ENCODE measurements at regions of chr6 and their contacts with region 1.

Region 1: DNA sequence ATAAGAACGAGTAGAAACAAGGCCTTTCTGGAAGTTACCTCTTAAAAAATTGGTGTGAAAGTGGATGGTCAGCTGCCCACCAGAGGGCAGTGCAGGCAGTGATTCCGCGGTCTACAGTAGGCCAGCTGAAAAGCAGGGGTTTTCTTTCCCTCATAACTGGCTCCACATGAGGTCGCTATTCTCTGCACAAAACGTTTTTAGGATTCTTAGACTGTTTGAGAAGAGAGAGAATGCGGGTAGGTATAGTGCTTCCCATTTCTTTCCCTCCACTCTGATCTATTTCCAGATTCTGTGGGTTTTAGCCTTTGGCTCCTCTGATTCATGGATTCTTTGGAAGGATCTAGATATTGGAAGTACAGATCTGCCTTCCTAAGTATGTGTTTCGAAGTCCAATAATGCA is 14.2 kb downstream of the FIG4 start:
- DNase-seq: peak; percentile 67 to 83
- ATAC-seq: peak; percentile 87 to 99 (median 94)
- H3K4me3 ChIP-seq: no peak overlapping the region
- H3K27ac ChIP-seq: no peak overlapping the region
- H3K4me1 ChIP-seq: no peaks in the 10 kb centered on the region
- H3K27me3 ChIP-seq: no peaks in the 10 kb centered on the region
- CTCF ChIP-seq: peak; percentile 96

Region 2: GRCh38 chr6:109783250-109783986 is 78.2 kb after region 1 on chr6:
- intact Hi-C with region 1: loop called (anchors 1 to 5 kb)
- DNase-seq: no peak
- ATAC-seq: no peak
- H3K4me3 ChIP-seq: no peak overlapping the region
- H3K27ac ChIP-seq: no peak overlapping the region
- H3K4me1 ChIP-seq: no peaks in the 10 kb centered on the region
- H3K27me3 ChIP-seq: no peaks in the 10 kb centered on the region
- CTCF ChIP-seq: peak; percentile 10

Region 3: DNA sequence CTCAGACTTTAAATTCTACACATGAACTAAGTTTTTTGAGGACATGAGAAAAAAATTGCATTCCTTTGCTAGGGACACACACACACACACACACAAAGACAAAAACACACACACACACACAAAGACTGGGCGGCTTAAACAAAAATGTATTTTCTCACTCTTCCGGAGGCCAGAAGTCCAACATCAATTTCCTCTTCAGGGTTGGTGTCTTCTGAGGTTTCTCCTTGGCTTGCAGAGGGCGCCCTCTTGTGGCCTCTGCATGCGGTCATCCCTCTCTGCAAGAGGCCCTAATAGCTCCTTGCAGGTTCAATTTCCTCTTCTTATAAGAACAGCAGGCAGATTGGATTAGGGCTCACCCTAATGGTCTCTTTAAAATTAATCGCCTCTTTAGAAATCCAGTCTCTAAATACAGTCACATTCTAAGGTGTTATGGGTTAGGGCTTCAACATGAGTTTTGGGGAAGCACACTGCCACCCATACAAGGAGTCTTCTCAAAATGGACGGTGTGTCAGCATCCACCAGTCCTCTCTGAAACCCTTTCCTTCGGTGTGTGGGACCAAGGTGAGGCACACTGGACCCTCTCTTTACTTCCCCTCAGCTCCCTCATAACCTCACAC is 334.2 kb after region 1 on chr6:
- intact Hi-C with region 1: loop called (anchors 1 to 5 kb)
- DNase-seq: peak; percentile 84 to 85
- ATAC-seq: peak; percentile 79 to 87 (median 84)
- H3K4me3 ChIP-seq: no peak overlapping the region
- H3K27ac ChIP-seq: no peak overlapping the region
- H3K4me1 ChIP-seq: no peaks in the 10 kb centered on the region
- H3K27me3 ChIP-seq: no peaks in the 10 kb centered on the region
- CTCF ChIP-seq: peak; percentile 83

Region 4: GRCh38 chr6:110389689-110390382 is 684.6 kb after region 1 on chr6:
- intact Hi-C with region 1: loop called (anchors 5 to 10 kb)
- DNase-seq: no peak
- ATAC-seq: no peak
- H3K4me3 ChIP-seq: no peak overlapping the region
- H3K27ac ChIP-seq: no peak overlapping the region
- H3K4me1 ChIP-seq: no peaks in the 10 kb centered on the region
- H3K27me3 ChIP-seq: no peaks in the 10 kb centered on the region
- CTCF ChIP-seq: no peak

Region 5: DNA sequence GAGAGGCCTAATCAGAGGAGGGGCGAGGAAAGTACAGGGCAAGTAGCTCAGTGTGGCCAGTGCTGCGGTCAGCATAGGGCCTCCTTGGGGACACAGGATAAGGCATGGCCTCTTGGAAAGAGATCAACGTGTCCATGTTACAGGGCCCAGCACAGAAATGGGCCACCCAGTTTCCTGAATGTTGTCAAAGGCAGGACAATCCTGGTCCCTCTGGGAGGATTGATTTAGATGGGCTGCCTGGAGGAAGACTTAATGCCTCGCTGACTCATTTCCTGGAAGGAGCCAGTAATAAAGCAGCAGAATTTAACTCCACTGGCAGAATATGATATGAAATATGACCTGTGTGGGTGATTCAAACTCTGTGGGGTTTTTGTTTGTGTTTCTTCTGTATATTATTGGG is 693.5 kb after region 1 on chr6:
- intact Hi-C with region 1: loop called (anchors 5 to 10 kb)
- DNase-seq: no peak
- ATAC-seq: no peak
- H3K4me3 ChIP-seq: no peak overlapping the region
- H3K27ac ChIP-seq: no peak overlapping the region
- H3K4me1 ChIP-seq: no peaks in the 10 kb centered on the region
- H3K27me3 ChIP-seq: no peaks in the 10 kb centered on the region
- CTCF ChIP-seq: no peak